ENCODE measurements at regions of chr14 and their contacts with region 1.

Region 1: DNA sequence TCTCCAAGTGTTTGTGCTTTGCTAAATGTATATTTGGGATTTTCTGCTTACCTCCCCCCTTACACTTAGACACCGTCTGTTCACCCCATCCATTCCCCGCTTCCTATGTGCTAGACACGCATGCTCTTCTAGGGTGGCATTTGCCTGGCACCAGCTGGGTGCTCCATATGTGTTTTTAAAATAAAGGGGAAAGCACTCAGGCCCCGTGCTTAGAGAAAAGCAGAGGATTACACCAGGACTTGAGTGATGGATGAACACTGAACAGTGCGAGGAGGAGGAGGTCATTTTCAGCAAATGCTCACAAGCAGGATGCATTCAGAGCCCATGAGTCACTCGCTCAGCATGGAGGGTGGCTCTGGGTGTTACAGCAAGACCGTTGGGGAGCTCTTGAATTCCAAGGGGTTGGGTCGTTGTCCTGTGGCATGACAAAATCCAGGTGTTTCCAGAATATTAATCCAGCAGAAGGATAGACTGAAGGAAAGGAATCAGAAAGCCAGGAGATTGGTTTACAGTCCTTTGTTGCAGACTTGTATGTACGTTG is 2.9 kb upstream of the BDKRB1 start:
- DNase-seq: peak; percentile 81
- H3K4me3 ChIP-seq: no peak overlapping the region; the same call in 1 of the 2 replicates
- CTCF ChIP-seq: no peak

Region 2: GRCh38 chr14:96268431-96269358 is 15.6 kb after region 1 on chr14:
- CTCF ChIA-PET with region 1: interaction called, 73 read pairs
- POLR2A ChIA-PET with region 1: interaction called, 5 read pairs
- DNase-seq: peak; percentile 88
- H3K4me3 ChIP-seq: no peak overlapping the region
- CTCF ChIP-seq: no peak